ENCODE measurements at regions of chr11 and their contacts with region 1.

Region 1: DNA sequence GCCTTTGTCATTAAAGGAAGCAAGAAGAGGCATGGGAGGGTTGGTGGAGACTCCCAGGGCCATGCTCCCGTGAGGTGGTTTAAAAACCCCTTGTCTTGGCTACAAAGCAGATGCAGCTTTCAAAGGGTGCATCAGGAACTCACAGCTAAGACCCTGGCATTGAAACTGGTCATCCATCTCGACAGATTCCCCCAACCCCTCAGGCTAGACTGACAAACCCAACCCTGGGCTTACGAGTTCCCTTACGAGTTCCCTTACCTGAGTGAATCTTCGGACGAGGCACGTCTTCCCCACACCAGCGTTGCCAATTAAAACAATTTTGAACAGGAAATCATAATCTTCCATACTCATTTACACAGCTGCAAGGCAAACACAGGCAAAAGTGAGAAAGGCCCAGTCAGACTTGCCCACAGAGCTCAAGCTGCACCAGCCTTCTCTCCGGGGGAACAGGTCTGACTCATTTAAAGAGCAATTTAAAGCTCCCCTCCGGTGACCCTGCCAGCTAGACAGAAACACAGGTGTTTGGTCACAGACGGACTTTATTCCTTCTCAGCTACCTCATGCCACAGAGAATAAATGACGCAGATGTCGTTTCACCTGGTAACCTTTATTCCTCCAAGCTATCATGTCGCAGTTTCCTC is 74.6 kb downstream of the RAB30 start:
- DNase-seq: no peak
- H3K4me3 Mint-ChIP-seq: no peak overlapping the region
- H3K27ac Mint-ChIP-seq: peak overlapping the region; percentile 37
- H3K4me1 Mint-ChIP-seq: peaks cover 67% of the 10 kb centered on the region
- H3K27me3 Mint-ChIP-seq: no peaks in the 10 kb centered on the region

Region 2: GRCh38 chr11:82586581-82586980 is 410.5 kb before region 1 on chr11:
- intact Hi-C with region 1: no loop called
- DNase-seq: no peak
- H3K4me3 Mint-ChIP-seq: no peak overlapping the region
- H3K27ac Mint-ChIP-seq: no peak overlapping the region
- H3K4me1 Mint-ChIP-seq: no peaks in the 10 kb centered on the region
- H3K27me3 Mint-ChIP-seq: no peaks in the 10 kb centered on the region

Region 3: DNA sequence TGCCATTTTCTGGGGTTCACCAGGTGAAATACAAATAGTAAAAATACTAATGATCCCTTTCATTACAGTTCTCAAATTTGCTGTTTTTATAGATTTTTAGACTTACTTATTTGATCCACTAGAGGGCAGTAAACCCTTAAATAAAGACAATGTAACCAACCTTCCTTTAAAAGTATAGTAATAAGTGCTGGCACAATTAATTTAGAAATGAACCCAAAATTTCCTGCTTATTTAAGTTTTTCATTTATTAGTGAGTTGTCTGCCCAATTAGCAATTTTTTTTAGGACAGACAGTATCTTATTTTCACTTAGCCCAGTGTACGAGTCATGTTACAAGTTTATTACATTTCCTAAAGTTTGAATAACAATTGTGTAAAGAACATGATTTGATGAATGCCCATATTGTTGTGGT is 90.8 kb before region 1 on chr11:
- intact Hi-C with region 1: loop called (anchors 1 kb)
- DNase-seq: no peak
- H3K4me3 Mint-ChIP-seq: no peak overlapping the region
- H3K27ac Mint-ChIP-seq: no peak overlapping the region
- H3K4me1 Mint-ChIP-seq: peaks cover 56% of the 10 kb centered on the region
- H3K27me3 Mint-ChIP-seq: no peaks in the 10 kb centered on the region

Region 4: DNA sequence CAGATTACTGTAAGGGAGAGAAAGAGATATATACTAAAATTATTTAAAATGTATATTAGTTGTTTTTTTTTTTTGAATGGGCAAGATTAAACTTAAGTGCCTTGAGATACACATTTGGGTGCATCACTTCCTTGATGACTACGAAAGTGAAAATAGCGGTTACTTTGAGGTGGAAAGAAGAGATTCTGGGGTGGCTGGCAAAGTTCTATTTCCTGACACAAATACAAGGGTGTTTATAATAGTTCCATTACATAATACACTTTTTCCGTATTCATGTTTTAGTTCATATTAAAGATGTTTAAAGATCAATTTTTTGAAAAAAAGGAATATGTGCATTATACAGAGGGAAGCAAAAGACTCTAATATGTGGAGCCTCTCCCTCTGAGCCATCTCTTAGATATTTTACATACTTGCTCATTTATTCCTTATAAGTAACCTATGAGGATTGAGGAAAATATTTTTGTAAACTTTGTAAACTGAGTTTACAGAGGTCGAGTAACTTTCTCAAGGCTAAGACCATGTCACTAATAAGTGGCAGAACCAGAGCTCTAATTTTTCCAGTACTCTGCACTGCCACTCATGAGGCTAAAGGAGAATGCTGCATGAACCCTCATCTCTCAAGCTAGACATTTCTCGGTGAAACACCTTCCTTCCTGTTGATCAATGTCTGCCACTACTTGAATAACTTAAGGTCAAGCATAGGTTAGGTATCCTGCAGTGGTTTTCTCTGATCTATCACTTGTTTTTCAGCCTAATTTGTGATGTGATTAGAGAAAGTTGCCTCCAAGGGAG is 36.9 kb before region 1 on chr11:
- intact Hi-C with region 1: loop called (anchors 1 kb)
- DNase-seq: peak; percentile 42
- H3K4me3 Mint-ChIP-seq: peak overlapping the region; percentile 68
- H3K27ac Mint-ChIP-seq: peak overlapping the region; percentile 91
- H3K4me1 Mint-ChIP-seq: peaks cover 59% of the 10 kb centered on the region
- H3K27me3 Mint-ChIP-seq: no peaks in the 10 kb centered on the region

Region 5: DNA sequence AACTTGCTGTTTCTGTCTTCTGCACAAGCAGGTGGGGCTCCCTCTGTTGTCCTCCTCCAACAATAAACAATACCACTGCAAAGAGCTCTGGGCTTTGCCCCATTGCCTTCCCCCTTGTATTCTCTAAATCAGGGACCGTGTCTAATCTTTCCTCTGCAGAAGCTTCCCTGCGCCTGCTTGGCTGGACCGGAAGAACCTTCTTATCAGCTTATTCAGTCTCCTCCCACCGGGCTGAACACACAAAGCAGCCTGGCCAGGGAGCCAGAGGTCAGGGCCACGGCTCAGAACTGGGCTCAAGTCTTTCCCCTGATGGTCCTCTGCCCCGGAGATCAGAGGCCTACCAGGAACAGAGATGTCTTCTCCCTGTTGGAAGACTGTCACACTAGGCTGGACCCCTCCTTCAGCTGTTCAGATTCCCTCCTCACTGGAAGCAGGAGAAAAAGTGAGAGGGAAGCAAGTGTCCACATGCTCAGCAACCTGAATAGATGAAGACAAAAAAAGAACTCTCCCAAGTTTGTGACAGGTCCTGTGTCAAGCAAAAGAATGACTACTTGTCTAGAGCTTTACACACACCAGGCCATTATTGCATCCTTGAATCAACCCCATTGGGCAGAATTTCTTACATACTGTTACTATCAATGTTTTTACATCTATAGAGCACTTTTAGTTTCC is 11.0 kb after region 1 on chr11:
- intact Hi-C with region 1: loop called (anchors 1 kb)
- DNase-seq: no peak
- H3K4me3 Mint-ChIP-seq: no peak overlapping the region
- H3K27ac Mint-ChIP-seq: no peak overlapping the region
- H3K4me1 Mint-ChIP-seq: peaks cover 57% of the 10 kb centered on the region
- H3K27me3 Mint-ChIP-seq: no peaks in the 10 kb centered on the region

Region 6: DNA sequence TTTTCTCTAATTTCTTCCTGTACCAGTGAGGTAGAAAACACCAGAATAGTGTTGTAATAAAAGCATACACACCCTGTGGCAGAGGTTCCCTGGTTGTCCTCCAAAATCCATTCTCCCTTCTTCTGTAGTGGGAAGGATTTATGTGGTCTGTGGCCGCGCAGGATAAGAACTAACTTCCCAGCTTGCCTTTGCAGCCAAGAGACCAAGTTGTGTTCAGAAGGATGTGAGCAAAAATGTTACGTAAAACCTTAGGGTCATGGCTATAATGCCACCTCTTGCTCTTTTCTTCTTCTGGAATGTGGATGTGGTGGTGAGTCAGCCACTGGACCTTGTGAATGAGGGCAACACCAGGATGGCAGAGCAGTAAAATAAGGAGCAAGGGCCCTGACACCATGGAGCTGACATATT is 260.7 kb after region 1 on chr11:
- intact Hi-C with region 1: no loop called
- DNase-seq: no peak
- H3K4me3 Mint-ChIP-seq: no peak overlapping the region
- H3K27ac Mint-ChIP-seq: no peak overlapping the region
- H3K4me1 Mint-ChIP-seq: no peaks in the 10 kb centered on the region
- H3K27me3 Mint-ChIP-seq: no peaks in the 10 kb centered on the region

Measured in activated T-helper 1 cell treated with anti-CD3 and anti-CD28 coated beads, Interleukin-12 subunit alpha, Interleukin-12 subunit beta, Interleukin-2, Interleukin-4 antibody, amounts not matched to agents 30 ng/mL and 10 ng/mL and 1 ng/mL, durations not matched to agents 14 hours and 24 hours and 36 hours (primary cell).